ENCODE measurements at regions of chr1 and their contacts with region 1.

Region 1: GRCh38 chr1:59678493-59679228 is 136.1 kb upstream of the HOOK1 start:
- DNase-seq: peak; percentile 62 to 83 (median 75)
- H3K4me3 ChIP-seq: no peak overlapping the region
- H3K4me3 Mint-ChIP-seq: no peak overlapping the region
- H3K27ac ChIP-seq: no peak overlapping the region
- H3K27ac Mint-ChIP-seq: peak overlapping the region in 4 of 7 donors; percentile 1 to 53 (median 23)
- H3K4me1 ChIP-seq: peaks cover 62 to 63% of the 10 kb centered on the region in 2 donors
- H3K4me1 Mint-ChIP-seq: peaks cover 61% of the 10 kb centered on the region
- H3K27me3 ChIP-seq: no peaks in the 10 kb centered on the region
- H3K27me3 Mint-ChIP-seq: no peaks in the 10 kb centered on the region
- CTCF ChIP-seq: no peak

Region 2: DNA sequence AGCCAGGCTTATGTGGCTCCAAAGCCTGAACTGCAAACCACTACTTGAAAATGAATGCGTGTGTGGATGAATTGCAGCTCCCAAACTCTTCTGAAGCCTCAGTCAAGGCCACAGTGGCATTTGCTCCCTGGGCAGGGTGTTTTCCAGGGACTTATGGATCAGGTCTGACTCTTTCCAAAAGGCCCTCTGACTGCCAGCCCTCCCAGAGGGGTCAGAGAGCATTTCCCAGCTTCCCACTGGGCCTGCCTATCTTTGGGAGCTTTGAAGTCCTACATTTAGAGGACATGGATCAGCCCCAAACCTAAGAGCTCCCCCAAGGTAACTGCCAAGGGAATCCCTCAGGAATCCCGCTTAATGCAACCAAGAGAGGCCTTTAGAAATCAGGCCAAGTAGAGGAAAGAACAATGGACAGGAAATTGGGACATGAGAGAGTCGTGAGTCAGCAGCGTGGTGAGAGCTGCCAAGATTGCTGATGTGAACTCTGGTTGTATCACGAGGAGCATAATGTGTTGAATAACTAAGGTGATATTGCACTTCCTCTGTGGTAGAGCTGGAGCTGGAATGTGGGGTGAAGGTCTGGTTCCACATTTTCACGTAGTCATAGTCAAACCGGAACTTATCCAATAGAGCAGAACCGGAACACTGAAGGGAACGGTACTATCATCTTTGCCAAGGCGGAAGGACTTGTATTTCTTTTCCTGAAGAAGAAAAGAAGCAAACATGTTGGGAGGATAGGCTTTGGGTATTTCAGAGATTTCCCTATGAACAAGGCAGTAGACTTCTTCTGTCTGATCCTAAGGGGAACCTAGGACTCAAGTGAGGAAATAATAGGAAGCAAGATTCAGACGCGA is 795.4 kb before region 1 on chr1:
- intact Hi-C with region 1: loop called in 1 of 2 experiments (anchors 10 kb)
- DNase-seq: peak; percentile 95 to 99 (median 99)
- H3K4me3 ChIP-seq: peak overlapping the region in 2 of 3 experiments; percentile 9 to 47
- H3K4me3 Mint-ChIP-seq: peak overlapping the region in 1 of 2 donors; percentile 65
- H3K27ac ChIP-seq: peak overlapping the region; percentile 90 to 94
- H3K27ac Mint-ChIP-seq: peak overlapping the region; percentile 92 to 97 (median 95)
- H3K4me1 ChIP-seq: peaks cover 55 to 61% of the 10 kb centered on the region in 2 donors
- H3K4me1 Mint-ChIP-seq: peaks cover 79% of the 10 kb centered on the region
- H3K27me3 ChIP-seq: no peaks in the 10 kb centered on the region
- H3K27me3 Mint-ChIP-seq: peaks cover 0 to 3% (median 0%) of the 10 kb centered on the region in 3 donors
- CTCF ChIP-seq: no peak

Region 3: GRCh38 chr1:59020151-59020997 is 658.3 kb before region 1 on chr1:
- intact Hi-C with region 1: loop called in 1 of 2 experiments (anchors 10 kb)
- DNase-seq: peak; percentile 83 to 91 (median 90)
- H3K4me3 ChIP-seq: peak overlapping the region in 2 of 3 experiments; percentile 16 to 62
- H3K4me3 Mint-ChIP-seq: peak overlapping the region; percentile 51 to 77
- H3K27ac ChIP-seq: peak overlapping the region in 1 of 2 donors; percentile 80
- H3K27ac Mint-ChIP-seq: peak overlapping the region; percentile 89 to 93 (median 91)
- H3K4me1 ChIP-seq: peaks cover 24 to 30% of the 10 kb centered on the region in 2 donors
- H3K4me1 Mint-ChIP-seq: peaks cover 41% of the 10 kb centered on the region
- H3K27me3 ChIP-seq: no peaks in the 10 kb centered on the region
- H3K27me3 Mint-ChIP-seq: peaks cover 0 to 3% (median 0%) of the 10 kb centered on the region in 3 donors
- CTCF ChIP-seq: no peak

Region 4: GRCh38 chr1:59506952-59507351 is 171.7 kb before region 1 on chr1:
- intact Hi-C with region 1: loop called in 1 of 2 experiments (anchors 10 kb)
- DNase-seq: peak; percentile 88 to 95 (median 92)
- H3K4me3 ChIP-seq: no peak overlapping the region
- H3K4me3 Mint-ChIP-seq: peak overlapping the region in 1 of 2 donors; percentile 4
- H3K27ac ChIP-seq: peak overlapping the region in 1 of 2 donors; percentile 64
- H3K27ac Mint-ChIP-seq: peak overlapping the region; percentile 29 to 96 (median 81)
- H3K4me1 ChIP-seq: peaks cover 12 to 18% of the 10 kb centered on the region in 2 donors
- H3K4me1 Mint-ChIP-seq: peaks cover 14% of the 10 kb centered on the region
- H3K27me3 ChIP-seq: no peaks in the 10 kb centered on the region
- H3K27me3 Mint-ChIP-seq: no peaks in the 10 kb centered on the region
- CTCF ChIP-seq: no peak

Region 5: GRCh38 chr1:59549903-59550302 is 128.8 kb before region 1 on chr1:
- intact Hi-C with region 1: loop called in 1 of 2 experiments (anchors 10 kb)
- DNase-seq: peak; percentile 76 to 89 (median 88)
- H3K4me3 ChIP-seq: peak overlapping the region in 2 of 3 experiments; percentile 9 to 37
- H3K4me3 Mint-ChIP-seq: peak overlapping the region; percentile 21 to 62
- H3K27ac ChIP-seq: peak overlapping the region; percentile 60 to 83
- H3K27ac Mint-ChIP-seq: peak overlapping the region; percentile 86 to 98 (median 94)
- H3K4me1 ChIP-seq: peaks cover 29 to 36% of the 10 kb centered on the region in 2 donors
- H3K4me1 Mint-ChIP-seq: peaks cover 36% of the 10 kb centered on the region
- H3K27me3 ChIP-seq: no peaks in the 10 kb centered on the region
- H3K27me3 Mint-ChIP-seq: peaks cover 0 to 2% (median 0%) of the 10 kb centered on the region in 3 donors
- CTCF ChIP-seq: no peak